MCF 10A (cell line): ENCODE measurements at regions of chr22 and their contacts with region 1.

Region 1: GRCh38 chr22:39514373-39514973 is 5.9 kb upstream of the ATF4 start:
- DNase-seq: peak; percentile 56
- H3K4me3 Mint-ChIP-seq: no peak overlapping the region
- H3K27ac Mint-ChIP-seq: no peak overlapping the region
- H3K4me1 Mint-ChIP-seq: no peaks in the 10 kb centered on the region
- H3K27me3 Mint-ChIP-seq: no peaks in the 10 kb centered on the region
- CTCF ChIP-seq: peak; percentile 53

Region 2: DNA sequence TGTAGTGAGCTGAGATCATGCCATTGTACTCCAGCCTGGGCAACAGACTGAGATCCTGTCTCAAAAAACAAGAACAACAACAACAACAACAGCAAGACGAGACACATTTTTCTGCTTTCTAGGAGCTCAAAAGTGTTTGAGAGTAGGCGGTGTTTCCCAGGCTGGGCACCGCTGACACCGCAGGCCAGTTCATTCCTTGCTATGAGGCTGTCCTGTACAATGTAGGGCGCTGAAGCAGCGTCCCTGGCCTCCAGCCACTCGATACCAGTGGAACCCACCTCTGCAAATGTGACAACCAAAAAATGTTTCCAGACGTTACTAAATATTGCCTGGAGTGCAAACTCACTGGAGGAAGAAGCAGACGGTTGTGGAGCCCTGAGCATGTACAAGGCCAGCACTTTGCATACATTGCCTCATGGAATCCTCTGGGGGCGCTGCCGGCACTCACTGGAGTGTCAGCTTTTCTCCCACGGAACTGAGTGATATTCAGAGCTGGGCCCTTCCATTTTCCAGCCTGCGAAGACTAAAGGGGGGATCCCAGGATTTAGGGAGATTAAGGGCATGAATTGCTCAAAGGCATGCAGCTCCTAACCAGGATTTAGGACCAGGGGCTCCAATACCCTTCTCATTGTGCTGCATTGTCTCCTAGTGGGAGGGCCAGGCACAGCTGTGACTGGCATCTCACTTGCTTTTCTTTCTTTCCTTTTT is 18.2 kb before region 1 on chr22:
- CTCF ChIA-PET with region 1: interaction called, 16 read pairs
- POLR2A ChIA-PET with region 1: interaction called, 58 read pairs
- intact Hi-C with region 1: no loop called
- DNase-seq: peak; percentile 58
- H3K4me3 Mint-ChIP-seq: no peak overlapping the region
- H3K27ac Mint-ChIP-seq: no peak overlapping the region
- H3K4me1 Mint-ChIP-seq: peaks cover 2% of the 10 kb centered on the region
- H3K27me3 Mint-ChIP-seq: no peaks in the 10 kb centered on the region
- CTCF ChIP-seq: peak; percentile 61

Region 3: DNA sequence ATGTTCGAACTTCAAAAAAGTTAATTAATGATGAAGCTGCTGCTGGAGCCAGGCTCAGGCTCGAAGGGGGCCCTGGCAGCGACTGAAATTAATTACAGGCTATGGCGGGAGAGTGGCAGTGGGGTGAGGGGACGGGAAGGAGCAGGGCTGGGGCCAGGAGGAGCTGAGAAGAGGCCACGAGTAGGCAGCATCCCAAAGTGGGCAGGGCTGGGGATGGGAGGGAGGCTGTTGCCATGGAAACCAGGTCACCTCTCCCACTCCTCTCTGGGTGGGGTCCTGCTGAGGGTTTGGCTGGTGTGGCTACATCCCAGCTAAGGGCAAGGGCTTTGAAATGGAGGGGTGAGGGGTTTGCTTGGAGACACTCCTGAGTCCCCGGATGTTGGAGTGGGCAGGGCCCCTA is 79.9 kb after region 1 on chr22:
- CTCF ChIA-PET with region 1: no interaction called
- POLR2A ChIA-PET with region 1: no interaction called
- intact Hi-C with region 1: no loop called
- DNase-seq: no peak
- H3K4me3 Mint-ChIP-seq: no peak overlapping the region
- H3K27ac Mint-ChIP-seq: no peak overlapping the region
- H3K4me1 Mint-ChIP-seq: peaks cover 20% of the 10 kb centered on the region
- H3K27me3 Mint-ChIP-seq: peaks cover 11% of the 10 kb centered on the region
- CTCF ChIP-seq: no peak

Region 4: DNA sequence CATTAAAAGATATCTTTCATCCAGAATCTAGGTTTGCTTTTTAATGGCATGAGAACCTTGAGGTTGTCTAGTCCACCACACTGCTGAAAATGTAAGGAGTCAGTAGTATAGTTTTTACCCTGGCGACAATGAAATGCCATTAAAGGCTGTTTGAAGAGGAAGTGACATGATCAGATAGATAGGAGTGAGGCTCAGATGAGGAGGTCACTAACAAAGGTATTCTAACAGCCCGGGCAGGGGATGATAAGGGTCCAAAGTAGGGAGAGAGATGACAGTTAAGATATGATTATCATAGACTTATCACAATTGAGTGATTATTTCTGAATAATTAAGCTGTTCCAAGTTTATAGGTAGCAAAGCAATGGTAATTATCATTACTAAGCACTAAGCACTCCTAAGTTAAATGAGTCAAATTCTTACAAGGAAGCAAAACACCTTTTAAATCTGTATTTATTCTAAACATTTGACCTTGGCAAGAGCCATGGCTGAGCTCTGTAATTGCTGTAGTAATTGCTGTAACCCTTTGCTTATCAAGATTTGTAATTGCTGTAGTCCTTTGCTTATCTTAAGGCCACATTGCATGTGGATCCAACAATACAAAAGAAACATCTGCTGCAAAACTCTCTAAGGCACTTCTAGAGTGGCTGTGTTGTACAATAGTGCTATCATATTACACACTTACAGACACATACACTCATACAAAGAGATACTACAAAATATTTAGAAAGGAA is 286.5 kb after region 1 on chr22:
- CTCF ChIA-PET with region 1: no interaction called
- POLR2A ChIA-PET with region 1: no interaction called
- intact Hi-C with region 1: no loop called
- DNase-seq: no peak
- H3K4me3 Mint-ChIP-seq: no peak overlapping the region
- H3K27ac Mint-ChIP-seq: no peak overlapping the region
- H3K4me1 Mint-ChIP-seq: no peaks in the 10 kb centered on the region
- H3K27me3 Mint-ChIP-seq: peaks cover 81% of the 10 kb centered on the region
- CTCF ChIP-seq: no peak